HepG2 (cell line): ENCODE measurements at regions of chr17 and their contacts with region 1.

Region 1: GRCh38 chr17:31467502-31468256 is 76.2 kb downstream of the RAB11FIP4 start:
- DNase-seq: peak; percentile 91
- ATAC-seq: peak; percentile 89
- H3K4me3 ChIP-seq: peak overlapping the region in 1 of 3 experiments; percentile 18; a peak in 1 of 6 replicates
- H3K27ac ChIP-seq: peak overlapping the region; percentile 88
- H3K4me1 ChIP-seq: peaks cover 85% of the 10 kb centered on the region
- H3K27me3 ChIP-seq: no peaks in the 10 kb centered on the region
- CTCF ChIP-seq: no peak
- EP300 ChIP-seq: peak; percentile 53 to 86; a peak in 3 of 4 replicates
- POLR2A ChIP-seq: no peak; a peak in 1 of 4 replicates
- RAD21 ChIP-seq: peak; percentile 56; the same call in 1 of the 2 replicates

Region 2: DNA sequence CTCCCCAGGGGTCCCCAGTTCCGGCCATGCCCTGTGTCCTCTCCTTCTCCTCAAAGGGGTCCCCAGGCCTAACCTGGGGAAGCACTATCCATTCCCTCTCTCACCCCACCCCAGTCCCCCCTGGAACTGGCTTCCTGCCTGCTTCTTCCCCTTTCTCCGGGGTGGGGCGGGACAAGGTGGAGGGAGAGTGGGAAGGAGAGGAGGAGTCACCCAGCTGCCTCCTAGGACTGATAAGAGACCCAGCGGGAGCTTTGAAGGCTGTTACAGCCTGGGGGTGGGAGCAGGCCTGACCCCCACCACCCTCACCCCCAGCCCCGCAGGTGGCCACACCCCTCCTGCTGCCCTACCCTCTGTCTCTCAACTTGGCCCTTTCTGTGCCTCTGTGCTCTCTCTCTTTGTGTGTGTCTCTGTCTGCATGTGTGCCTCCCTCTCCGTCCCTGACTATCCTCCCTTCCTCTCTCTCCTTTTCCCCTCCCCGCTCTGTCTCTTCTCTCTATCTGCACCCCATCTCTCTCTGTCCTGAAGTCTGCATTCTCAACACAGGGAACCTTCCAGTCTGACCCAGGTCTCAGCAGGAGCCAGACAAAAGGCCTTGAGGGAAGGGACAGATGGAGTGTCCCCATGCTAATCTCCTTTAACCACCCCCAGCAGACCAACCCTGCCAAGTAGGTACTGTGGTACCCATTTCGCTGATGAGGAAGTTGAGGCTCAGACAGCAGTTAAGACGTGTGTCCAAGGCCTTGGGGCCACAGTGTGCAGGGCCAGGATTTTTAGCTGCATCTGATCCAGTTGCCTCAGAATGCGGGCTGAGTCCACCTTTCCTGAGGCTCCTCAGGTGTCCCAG is 10.1 kb before region 1 on chr17:
- CTCF ChIA-PET with region 1: no interaction called
- POLR2A ChIA-PET with region 1: interaction called, 13 read pairs
- in situ Hi-C with region 1: no loop called
- intact Hi-C with region 1: no loop called
- DNase-seq: no peak
- ATAC-seq: peak; percentile 18
- H3K4me3 ChIP-seq: peak overlapping the region in 2 of 3 experiments; percentile 29 to 61; a peak in 2 of 6 replicates
- H3K27ac ChIP-seq: no peak overlapping the region
- H3K4me1 ChIP-seq: peaks cover 66% of the 10 kb centered on the region
- H3K27me3 ChIP-seq: no peaks in the 10 kb centered on the region
- CTCF ChIP-seq: no peak
- EP300 ChIP-seq: no peak
- POLR2A ChIP-seq: no peak
- RAD21 ChIP-seq: no peak

Region 3: GRCh38 chr17:31487648-31488263 is 20.1 kb after region 1 on chr17:
- CTCF ChIA-PET with region 1: no interaction called
- POLR2A ChIA-PET with region 1: interaction called, 104 read pairs
- in situ Hi-C with region 1: no loop called
- intact Hi-C with region 1: no loop called
- DNase-seq: peak; percentile 86
- ATAC-seq: peak; percentile 90
- H3K4me3 ChIP-seq: peak overlapping the region; percentile 81 to 95 (median 87)
- H3K27ac ChIP-seq: peak overlapping the region; percentile 73
- H3K4me1 ChIP-seq: peaks cover 53% of the 10 kb centered on the region
- H3K27me3 ChIP-seq: no peaks in the 10 kb centered on the region
- CTCF ChIP-seq: peak; percentile 50
- EP300 ChIP-seq: 0 out of 4 replicates have a peak, but pooled peaks of 1 of the 2 experiments have one; percentile 3
- POLR2A ChIP-seq: peak; percentile 91 to 98
- RAD21 ChIP-seq: peak; percentile 68

Region 4: GRCh38 chr17:31499771-31500554 is 32.3 kb after region 1 on chr17:
- CTCF ChIA-PET with region 1: no interaction called
- POLR2A ChIA-PET with region 1: interaction called, 26 read pairs
- in situ Hi-C with region 1: no loop called
- intact Hi-C with region 1: no loop called
- DNase-seq: peak; percentile 91
- ATAC-seq: peak; percentile 64
- H3K4me3 ChIP-seq: peak overlapping the region; percentile 32 to 53 (median 41); a peak in 5 of 6 replicates
- H3K27ac ChIP-seq: peak overlapping the region; percentile 87
- H3K4me1 ChIP-seq: peaks cover 84% of the 10 kb centered on the region
- H3K27me3 ChIP-seq: no peaks in the 10 kb centered on the region
- CTCF ChIP-seq: no peak
- EP300 ChIP-seq: peak; percentile 55 to 84; a peak in 3 of 4 replicates
- POLR2A ChIP-seq: peak in 1 of 2 experiments; percentile 29; a peak in 2 of 4 replicates
- RAD21 ChIP-seq: no peak

Region 5: GRCh38 chr17:31533546-31534155 is 66.0 kb after region 1 on chr17:
- CTCF ChIA-PET with region 1: no interaction called
- POLR2A ChIA-PET with region 1: no interaction called
- in situ Hi-C with region 1: no loop called
- intact Hi-C with region 1: no loop called
- DNase-seq: no peak
- ATAC-seq: no peak
- H3K4me3 ChIP-seq: no peak overlapping the region
- H3K27ac ChIP-seq: no peak overlapping the region
- H3K4me1 ChIP-seq: peaks cover 14% of the 10 kb centered on the region
- H3K27me3 ChIP-seq: no peaks in the 10 kb centered on the region
- CTCF ChIP-seq: peak; percentile 67
- EP300 ChIP-seq: no peak
- POLR2A ChIP-seq: no peak
- RAD21 ChIP-seq: peak; percentile 40

Region 6: DNA sequence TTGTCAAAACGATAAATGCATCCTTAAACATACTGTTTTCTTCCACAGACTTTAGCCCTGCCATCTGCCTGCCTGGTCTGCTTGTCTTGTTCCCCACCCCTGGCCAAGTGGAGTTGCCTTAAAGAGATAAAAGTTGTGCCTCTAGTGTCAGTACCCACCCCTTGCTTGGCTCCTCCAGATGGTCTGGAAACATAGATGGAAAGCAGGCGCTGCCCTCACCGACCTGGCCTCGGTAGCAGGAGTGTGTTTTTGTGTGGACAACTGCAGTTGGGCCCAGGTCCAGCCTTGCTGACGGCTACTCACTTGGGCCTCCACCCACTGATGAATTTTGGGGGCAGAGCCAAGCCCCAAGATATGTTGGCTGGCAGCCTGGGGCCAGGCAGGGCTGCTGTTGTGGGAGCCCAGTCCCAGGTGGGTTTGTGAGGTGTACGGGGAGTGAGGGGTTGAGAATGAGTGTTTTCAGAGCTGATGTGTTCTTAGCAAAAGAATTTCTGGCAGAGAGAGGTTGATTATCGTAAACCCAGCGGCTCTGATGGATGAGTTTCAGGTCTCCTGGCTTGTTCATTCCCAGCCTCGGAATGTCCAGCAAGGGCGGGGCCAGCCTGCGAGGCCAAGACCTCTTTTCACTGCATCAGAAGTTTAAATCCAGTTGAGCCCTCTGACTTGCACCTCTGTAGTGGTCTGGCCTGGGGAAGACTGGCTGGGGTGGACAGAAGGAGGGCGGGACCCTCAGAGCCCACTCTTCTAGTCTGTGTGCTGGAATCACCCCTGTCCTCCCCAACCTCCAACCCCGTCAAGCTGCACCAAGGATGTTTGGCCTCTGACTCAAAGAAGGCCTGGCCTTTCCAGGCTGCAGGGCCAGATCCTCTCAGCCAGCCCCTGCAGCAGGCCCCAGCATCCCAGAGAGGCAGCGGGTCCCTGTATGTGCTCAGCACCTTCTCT is 103.5 kb after region 1 on chr17:
- CTCF ChIA-PET with region 1: no interaction called
- POLR2A ChIA-PET with region 1: no interaction called
- in situ Hi-C with region 1: no loop called
- intact Hi-C with region 1: no loop called
- DNase-seq: no peak
- ATAC-seq: no peak
- H3K4me3 ChIP-seq: no peak overlapping the region
- H3K27ac ChIP-seq: no peak overlapping the region
- H3K4me1 ChIP-seq: peaks cover 21% of the 10 kb centered on the region
- H3K27me3 ChIP-seq: peaks cover 9 to 42% of the 10 kb centered on the region in 2 experiments; a peak in 4 of 5 replicates
- CTCF ChIP-seq: no peak
- EP300 ChIP-seq: no peak
- POLR2A ChIP-seq: no peak
- RAD21 ChIP-seq: no peak

Region 7: DNA sequence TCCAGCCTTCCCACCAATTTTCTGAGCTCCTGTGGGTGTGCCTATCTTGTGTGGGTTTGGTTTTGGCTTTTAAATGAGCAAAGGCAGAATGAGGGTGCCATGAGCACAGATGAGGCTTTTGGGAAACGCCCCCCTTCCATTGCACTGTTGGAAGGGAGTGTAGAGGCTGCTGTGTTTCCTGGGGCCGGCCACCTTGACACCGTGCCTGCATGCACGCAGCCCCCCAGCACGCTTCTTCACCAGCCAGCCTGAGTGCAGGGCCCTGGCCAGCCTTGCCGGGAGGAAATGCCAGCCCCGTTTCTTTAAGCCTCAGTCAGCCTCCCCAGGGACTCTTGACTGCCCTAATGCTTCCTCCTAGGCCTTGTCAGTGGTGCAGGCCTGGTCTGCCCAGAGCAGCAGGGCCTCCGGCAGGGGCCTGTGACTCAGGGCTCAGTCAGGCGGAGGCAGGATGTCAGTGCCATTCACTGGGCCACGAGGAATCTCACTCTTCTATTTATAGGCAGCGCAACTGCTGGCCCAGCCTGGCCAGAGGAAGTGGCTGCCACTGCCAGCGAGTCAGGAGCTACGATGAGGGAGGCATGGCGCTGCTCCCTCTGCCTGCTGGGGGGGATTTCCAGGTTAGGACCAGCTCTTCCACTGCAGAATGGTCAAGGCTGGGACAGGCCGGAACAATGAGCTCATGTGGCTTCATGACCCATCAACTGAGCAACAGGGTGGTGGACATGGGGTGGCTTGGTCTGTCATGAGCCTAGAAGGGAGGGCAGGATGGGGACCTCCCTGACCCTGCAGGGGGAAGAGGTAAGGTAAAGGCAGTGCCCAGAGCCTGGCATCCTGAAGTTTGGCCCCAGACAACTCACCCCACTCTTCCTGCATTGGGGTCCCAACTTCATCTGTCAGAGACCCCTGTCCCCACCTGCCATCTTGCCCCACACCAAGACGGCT is 129.0 kb after region 1 on chr17:
- CTCF ChIA-PET with region 1: no interaction called
- POLR2A ChIA-PET with region 1: no interaction called
- in situ Hi-C with region 1: no loop called
- intact Hi-C with region 1: no loop called
- DNase-seq: peak; percentile 44
- ATAC-seq: peak; percentile 69
- H3K4me3 ChIP-seq: no peak overlapping the region
- H3K27ac ChIP-seq: no peak overlapping the region
- H3K4me1 ChIP-seq: peaks cover 56% of the 10 kb centered on the region
- H3K27me3 ChIP-seq: no peaks in the 10 kb centered on the region
- CTCF ChIP-seq: no peak
- EP300 ChIP-seq: no peak
- POLR2A ChIP-seq: no peak
- RAD21 ChIP-seq: no peak